ENCODE measurements at regions of chr1 and their contacts with region 1.

Region 1: DNA sequence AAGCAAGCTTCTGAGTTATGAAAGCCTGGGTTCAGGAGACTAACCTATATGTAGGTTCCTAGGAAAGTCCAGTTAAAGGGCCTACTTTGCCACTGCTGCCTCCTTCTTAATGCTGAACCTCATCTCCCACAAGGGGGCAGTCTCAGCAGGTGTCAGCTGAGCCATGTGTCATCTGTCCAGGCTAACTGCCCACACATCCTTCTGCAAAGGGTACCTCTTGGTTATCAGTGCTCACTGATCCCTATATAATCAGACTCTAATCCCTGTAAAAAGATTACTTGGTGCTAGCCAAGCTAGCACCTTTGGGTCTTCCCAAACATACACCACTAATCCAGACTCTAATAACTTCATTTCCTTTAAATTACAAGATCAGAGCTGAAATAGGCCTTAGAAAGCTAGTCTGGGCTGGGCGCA is 9.0 kb downstream of the PRDX1 start:
- DNase-seq: peak; percentile 76
- ATAC-seq: peak; percentile 40
- H3K4me3 ChIP-seq: no peak overlapping the region
- H3K27ac ChIP-seq: no peak overlapping the region
- H3K4me1 ChIP-seq: peaks cover 59% of the 10 kb centered on the region
- H3K27me3 ChIP-seq: no peaks in the 10 kb centered on the region
- CTCF ChIP-seq: peak; percentile 82
- EP300 ChIP-seq: no peak
- POLR2A ChIP-seq: peak in 1 of 2 experiments; percentile 64; a peak in 2 of 4 replicates
- RAD21 ChIP-seq: peak; percentile 77

Region 2: DNA sequence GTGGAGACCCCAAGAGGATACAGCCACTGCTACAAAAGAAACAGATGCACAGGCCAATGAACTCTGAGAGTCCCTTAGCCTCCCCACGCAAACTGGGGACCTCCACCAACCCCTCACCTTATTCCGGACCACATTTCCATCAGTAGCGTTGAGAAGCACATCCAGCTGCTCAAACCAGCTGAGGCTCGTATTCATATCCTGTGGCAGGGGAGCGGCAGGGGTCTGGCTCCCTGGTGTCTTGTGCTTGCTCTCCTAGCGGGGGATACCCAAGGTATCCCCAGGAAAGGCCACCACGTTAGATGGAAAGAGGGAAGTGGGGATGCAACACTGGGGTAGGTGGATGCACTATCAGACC is 13.3 kb before region 1 on chr1:
- CTCF ChIA-PET with region 1: no interaction called
- POLR2A ChIA-PET with region 1: interaction called, 144 read pairs
- in situ Hi-C with region 1: no loop called
- intact Hi-C with region 1: no loop called
- DNase-seq: no peak
- ATAC-seq: no peak; the same call in 1 of the 3 replicates
- H3K4me3 ChIP-seq: peak overlapping the region; percentile 74 to 83 (median 77)
- H3K27ac ChIP-seq: peak overlapping the region; percentile 71
- H3K4me1 ChIP-seq: peaks cover 43% of the 10 kb centered on the region
- H3K27me3 ChIP-seq: no peaks in the 10 kb centered on the region; a peak in 1 of 5 replicates
- CTCF ChIP-seq: no peak
- EP300 ChIP-seq: no peak
- POLR2A ChIP-seq: no peak
- RAD21 ChIP-seq: no peak

Region 3: DNA sequence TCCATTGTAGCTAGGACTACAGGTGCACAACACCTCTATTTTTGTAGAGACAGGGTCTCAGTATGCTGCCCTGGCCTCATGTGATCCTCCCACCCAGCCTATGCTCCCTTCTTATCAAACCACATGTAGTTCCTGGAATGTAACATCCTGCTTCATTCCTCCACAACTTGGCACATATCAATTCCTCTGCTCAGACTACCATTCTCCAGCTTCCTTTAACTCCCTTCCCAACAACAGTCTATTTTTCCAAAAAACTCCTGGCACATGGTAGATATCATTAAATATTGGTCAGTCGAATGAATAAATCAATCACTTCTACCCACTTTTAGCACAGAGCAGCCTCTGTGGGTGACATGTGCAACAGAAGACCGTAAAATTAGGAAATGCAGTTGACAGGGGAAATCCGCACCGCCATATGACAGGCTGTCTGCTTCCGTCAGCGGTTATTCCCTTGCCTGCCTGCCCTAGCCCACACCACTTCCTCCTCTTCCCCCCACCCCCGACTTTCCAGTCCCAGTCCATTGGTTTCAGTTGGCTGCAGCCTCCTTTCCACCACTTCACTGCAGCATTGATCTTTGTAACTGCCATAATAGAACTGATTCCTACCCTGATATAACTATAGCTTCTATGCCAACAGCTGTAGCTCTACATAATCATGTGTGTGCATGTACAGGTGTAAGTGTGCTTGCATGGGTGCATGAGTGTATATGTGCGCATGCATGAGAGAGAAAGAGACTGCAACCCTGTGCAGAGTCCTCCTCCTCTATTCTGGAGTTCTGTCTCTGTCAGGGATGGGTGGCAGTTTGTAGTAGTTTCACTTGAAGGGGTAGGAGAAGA is 31.2 kb after region 1 on chr1:
- CTCF ChIA-PET with region 1: no interaction called
- POLR2A ChIA-PET with region 1: interaction called, 690 read pairs
- in situ Hi-C with region 1: no loop called
- intact Hi-C with region 1: no loop called
- DNase-seq: peak; percentile 31
- ATAC-seq: peak; percentile 67
- H3K4me3 ChIP-seq: peak overlapping the region; percentile 40 to 51 (median 42); a peak in 5 of 6 replicates
- H3K27ac ChIP-seq: peak overlapping the region; percentile 86
- H3K4me1 ChIP-seq: peaks cover 49% of the 10 kb centered on the region
- H3K27me3 ChIP-seq: no peaks in the 10 kb centered on the region
- CTCF ChIP-seq: no peak
- EP300 ChIP-seq: no peak
- POLR2A ChIP-seq: no peak
- RAD21 ChIP-seq: no peak

Region 4: GRCh38 chr1:45569962-45570581 is 57.4 kb after region 1 on chr1:
- CTCF ChIA-PET with region 1: interaction called, 49 read pairs
- POLR2A ChIA-PET with region 1: interaction called, 18 read pairs
- in situ Hi-C with region 1: loop called (anchors 5 kb)
- intact Hi-C with region 1: loop called (anchors 1 kb)
- DNase-seq: peak; percentile 65
- ATAC-seq: peak; percentile 81
- H3K4me3 ChIP-seq: no peak overlapping the region
- H3K27ac ChIP-seq: no peak overlapping the region
- H3K4me1 ChIP-seq: no peaks in the 10 kb centered on the region
- H3K27me3 ChIP-seq: no peaks in the 10 kb centered on the region
- CTCF ChIP-seq: peak; percentile 96
- EP300 ChIP-seq: no peak
- POLR2A ChIP-seq: peak in 1 of 2 experiments; percentile 29; a peak in 1 of 4 replicates
- RAD21 ChIP-seq: peak; percentile 87